ENCODE measurements at regions of chr3 and their contacts with region 1.

Region 1: GRCh38 chr3:52154117-52155094 is at the start of gene POC1A:
- DNase-seq: peak; percentile 98
- ATAC-seq: peak; percentile 95
- H3K4me3 ChIP-seq: peak within 1 kb of the TSS; percentile 89
- H3K27ac ChIP-seq: peak within 1 kb of the TSS; percentile 71
- H3K4me1 ChIP-seq: peaks cover 17% of the 10 kb centered on the region
- H3K27me3 ChIP-seq: no peaks in the 10 kb centered on the region
- CTCF ChIP-seq: no peak
- total RNA-seq, gene POC1A: 41.5 and 43.0 TPM in 2 replicates

Region 2: GRCh38 chr3:52171514-52172261 is 17.3 kb after region 1 on chr3:
- CTCF ChIA-PET with region 1: no interaction called
- POLR2A ChIA-PET with region 1: interaction called, 4 read pairs
- intact Hi-C with region 1: loop called (anchors 1 kb)
- DNase-seq: peak; percentile 76
- ATAC-seq: peak; percentile 90
- H3K4me3 ChIP-seq: no peak overlapping the region
- H3K27ac ChIP-seq: peak overlapping the region; percentile 24; the same call in 1 of the 2 replicates
- H3K4me1 ChIP-seq: peaks cover 16% of the 10 kb centered on the region
- H3K27me3 ChIP-seq: no peaks in the 10 kb centered on the region
- CTCF ChIP-seq: peak; percentile 49

Region 3: DNA sequence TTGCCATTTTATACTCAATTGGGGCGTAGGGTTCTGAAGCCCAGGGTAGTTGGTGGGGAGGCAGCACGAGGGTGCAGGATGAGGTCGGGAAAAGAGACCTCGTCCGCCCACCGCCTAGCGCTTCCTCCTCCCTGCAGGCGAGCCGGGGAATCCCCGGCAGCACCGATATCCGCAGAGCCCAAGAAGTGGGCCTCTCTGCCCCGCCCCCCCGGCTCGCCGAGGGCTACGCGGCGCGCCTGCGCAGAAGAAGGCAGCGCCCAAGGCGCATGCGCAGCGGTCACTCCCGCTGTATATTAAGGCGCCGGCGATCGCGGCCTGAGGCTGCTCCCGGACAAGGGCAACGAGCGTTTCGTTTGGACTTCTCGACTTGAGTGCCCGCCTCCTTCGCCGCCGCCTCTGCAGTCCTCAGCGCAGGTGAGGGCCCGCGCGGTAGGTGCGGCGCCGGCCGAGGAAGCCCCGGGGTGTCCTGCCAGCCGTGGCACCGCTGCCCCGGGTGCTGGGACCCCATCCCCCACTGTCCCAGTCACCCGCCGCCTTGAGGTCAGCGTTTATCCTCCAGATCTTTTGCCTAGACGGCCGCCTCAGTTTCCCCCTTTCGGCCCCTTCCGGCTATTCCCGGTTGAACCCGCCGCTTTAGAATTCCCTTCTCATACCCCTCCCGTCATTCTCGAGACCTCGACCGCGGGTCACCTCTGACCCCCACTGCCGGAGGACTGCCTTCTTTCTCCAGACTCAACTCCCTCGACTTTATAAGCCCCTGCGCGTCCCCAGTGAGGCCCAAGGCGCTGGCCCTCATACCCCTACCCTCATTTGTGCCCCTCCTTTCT is 43.6 kb after region 1 on chr3 and contains the start of gene ALAS1:
- CTCF ChIA-PET with region 1: no interaction called
- POLR2A ChIA-PET with region 1: interaction called, 3 read pairs
- intact Hi-C with region 1: loop called (anchors 2 kb)
- DNase-seq: peak; percentile 96
- ATAC-seq: peak; percentile 72
- H3K4me3 ChIP-seq: peak within 1 kb of the TSS; percentile 83
- H3K27ac ChIP-seq: peak within 1 kb of the TSS; percentile 31
- H3K4me1 ChIP-seq: peaks cover 46% of the 10 kb centered on the region
- H3K27me3 ChIP-seq: no peaks in the 10 kb centered on the region
- CTCF ChIP-seq: no peak
- total RNA-seq, gene ALAS1: 63.5 and 69.5 TPM in 2 replicates

Region 4: DNA sequence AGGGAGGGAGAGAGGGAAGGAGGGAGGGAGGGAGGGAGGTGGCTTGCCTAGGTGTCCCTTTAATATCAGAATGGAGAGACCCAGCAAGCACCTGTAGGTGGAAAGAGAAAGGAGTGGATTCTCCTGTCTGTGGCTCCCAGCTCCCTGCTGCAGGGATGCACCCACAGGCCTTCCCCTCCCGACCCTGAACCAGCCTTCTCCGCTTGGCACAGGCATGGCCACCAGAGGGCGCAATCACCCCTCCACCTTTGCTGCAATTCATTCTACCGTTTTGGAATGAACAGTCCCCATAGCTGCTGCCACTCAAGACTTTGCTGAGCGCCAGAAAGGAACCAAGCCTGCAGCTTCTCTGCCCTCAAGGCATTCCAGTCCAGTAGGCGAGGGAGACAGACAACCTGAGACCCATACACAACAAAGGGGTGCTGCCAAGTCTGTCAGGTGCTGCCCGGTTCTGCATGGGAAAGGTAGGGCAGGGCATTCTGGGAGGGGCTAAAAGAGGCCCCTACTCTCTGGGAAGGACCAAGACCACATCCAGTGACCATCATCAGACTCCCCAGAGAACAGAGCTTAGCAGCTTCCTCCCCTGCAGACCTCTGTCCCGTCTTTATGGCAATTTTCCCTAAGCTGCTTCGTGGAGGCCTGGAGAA is 66.1 kb after region 1 on chr3:
- CTCF ChIA-PET with region 1: interaction called, 6 read pairs
- POLR2A ChIA-PET with region 1: interaction called, 9 read pairs
- intact Hi-C with region 1: loop called (anchors 1 kb)
- DNase-seq: peak; percentile 93
- ATAC-seq: peak; percentile 45
- H3K4me3 ChIP-seq: no peak overlapping the region
- H3K27ac ChIP-seq: 0 out of 2 replicates have a peak overlapping the region, but pooled peaks have one; percentile 13
- H3K4me1 ChIP-seq: peaks cover 49% of the 10 kb centered on the region
- H3K27me3 ChIP-seq: no peaks in the 10 kb centered on the region
- CTCF ChIP-seq: peak; percentile 94

Region 5: DNA sequence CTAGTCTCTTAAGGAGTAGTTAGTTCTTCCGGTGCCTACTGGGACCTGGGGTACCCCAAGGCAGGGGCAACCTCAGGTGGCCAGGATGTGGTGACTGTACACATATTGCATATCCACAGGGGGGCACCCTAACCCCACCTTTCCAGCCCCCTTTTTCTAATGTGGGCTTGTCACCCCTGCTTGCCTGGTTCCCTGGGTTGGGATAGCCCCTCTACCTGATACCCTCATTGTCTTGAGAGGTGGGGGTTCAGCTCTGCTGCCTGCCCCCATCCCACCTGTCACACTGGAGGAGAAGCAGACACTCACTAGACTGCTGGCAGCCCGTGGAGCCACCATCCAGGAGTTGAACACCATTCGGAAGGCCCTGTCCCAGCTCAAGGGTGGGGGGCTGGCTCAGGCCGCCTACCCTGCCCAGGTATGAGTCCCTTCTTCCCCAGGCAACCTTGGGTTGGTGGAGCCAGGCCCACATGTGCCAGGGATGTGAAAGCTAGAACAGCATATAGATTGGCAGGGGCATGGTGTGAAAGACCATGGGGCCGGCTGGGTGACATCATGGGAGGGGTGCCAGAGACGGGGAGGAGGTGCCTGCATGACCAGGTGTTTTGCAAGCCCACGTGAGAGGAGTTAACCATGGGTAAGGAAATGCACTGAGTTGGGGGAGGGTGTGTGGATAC is 137.2 kb after region 1 on chr3:
- CTCF ChIA-PET with region 1: no interaction called
- POLR2A ChIA-PET with region 1: no interaction called
- intact Hi-C with region 1: loop called (anchors 5 kb)
- DNase-seq: peak; percentile 45
- ATAC-seq: 0 out of 2 replicates have a peak, but pooled peaks have one; percentile 9
- H3K4me3 ChIP-seq: no peak overlapping the region
- H3K27ac ChIP-seq: no peak overlapping the region
- H3K4me1 ChIP-seq: peaks cover 13% of the 10 kb centered on the region
- H3K27me3 ChIP-seq: no peaks in the 10 kb centered on the region
- CTCF ChIP-seq: peak; percentile 87

Measured in PC-3 (cell line).